Tibial artery (tissue), 4 donors: ENCODE measurements at regions of chr17 and their contacts with region 1.

Region 1: DNA sequence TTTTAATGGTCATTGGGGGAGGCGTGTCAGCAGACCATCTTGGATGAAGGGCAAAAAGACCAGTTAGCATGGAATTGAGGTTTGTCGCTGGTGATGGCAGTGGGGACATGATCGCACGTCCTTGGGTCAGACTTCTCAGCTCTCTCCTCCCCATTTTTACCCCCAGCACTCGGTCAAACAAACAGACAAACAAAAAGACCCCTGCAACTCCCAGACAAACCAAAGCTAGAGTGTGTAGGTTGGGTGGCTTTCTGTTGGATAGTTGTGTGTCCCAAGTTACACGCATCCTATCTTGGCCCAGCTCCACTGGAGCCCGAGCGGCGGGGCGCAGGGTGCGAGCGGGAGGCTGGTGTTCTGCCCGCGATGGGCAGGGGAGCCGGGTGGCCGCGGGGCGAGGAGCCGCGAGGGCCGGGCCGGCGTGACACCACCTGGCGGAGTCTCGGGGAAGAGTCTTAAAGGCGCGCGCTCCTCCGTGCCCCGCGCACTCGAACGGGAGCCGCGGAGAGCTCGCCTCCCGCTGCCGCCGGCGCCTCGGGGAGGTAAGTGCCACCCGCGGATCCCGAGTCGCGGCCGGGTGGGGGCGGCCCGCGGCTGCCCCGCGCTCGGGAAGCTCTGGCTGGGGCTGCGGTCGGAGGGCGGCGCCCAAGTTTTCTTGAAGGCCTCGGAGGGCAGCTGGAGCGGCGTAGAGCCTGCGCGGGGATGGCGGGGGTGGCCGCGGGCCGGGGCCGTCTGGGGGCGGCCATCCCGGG is 18.5 kb upstream of the NTN1 start:
- DNase-seq: peak in 1 of 2 donors; percentile 81
- H3K4me3 ChIP-seq: peak overlapping the region; percentile 57 to 60
- H3K27ac ChIP-seq: peak overlapping the region; percentile 24 to 64
- H3K4me1 ChIP-seq: peaks cover 0 to 19% (median 14%) of the 10 kb centered on the region in 4 donors
- H3K27me3 ChIP-seq: peaks cover 0 to 31% of the 10 kb centered on the region in 2 donors
- CTCF ChIP-seq: peak; percentile 27 to 33

Region 2: DNA sequence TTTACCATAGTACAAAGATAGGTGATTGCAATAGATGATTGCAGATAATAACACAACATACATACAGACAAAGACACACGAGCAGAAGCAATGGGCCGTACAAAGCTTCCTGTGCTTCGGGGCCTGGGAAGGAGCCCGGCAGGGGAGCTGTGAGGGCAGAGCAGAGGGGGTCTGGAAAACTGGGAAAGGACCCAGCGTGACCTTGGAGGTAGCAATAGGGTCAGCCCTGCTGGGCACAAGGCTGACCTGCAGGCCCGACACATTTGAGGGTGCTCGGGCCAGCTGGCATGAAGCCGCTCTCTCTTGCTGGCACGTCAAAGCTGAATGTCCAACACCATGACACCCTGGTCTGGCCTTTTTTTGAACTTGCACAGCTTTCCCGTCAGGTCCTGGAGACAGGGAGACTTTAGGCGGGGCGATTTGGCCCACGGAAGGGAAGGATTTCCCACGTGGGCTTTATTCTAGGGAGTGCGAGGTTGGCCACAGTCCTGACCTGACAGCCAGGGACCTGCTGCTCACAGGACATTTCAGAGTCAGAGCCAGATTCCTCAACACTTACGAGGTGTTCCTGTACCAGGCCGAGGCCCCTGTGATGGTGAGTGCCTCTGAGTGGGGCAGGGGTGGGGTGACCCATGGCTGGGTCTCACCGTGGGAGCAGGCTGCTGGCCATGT is 101.7 kb after region 1 on chr17:
- intact Hi-C with region 1: no loop called
- DNase-seq: peak; percentile 45 to 88
- H3K4me3 ChIP-seq: no peak overlapping the region
- H3K27ac ChIP-seq: peak overlapping the region; percentile 47 to 54
- H3K4me1 ChIP-seq: peaks cover 0 to 44% (median 10%) of the 10 kb centered on the region in 4 donors
- H3K27me3 ChIP-seq: no peaks in the 10 kb centered on the region
- CTCF ChIP-seq: peak in 1 of 2 experiments; percentile 23

Region 3: DNA sequence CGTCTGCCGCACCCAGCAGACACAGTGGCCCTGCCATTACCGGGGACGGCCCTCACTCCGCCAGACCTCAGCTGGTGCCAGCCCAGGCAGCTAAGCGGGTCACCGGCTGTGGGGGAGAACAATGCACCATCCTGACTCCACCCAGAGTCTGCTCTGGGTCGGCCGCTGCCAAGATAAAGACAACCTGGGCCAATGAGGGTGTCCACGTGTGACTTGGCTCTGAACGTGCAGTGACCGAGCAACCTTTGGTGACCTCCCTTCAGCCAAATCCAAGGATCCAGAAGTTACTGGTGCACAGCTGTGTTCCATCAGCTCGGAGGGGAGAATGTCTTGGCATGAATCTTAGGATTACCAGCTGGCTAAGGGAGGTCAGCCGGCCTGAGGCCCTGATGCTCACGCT is 174.4 kb after region 1 on chr17:
- intact Hi-C with region 1: loop called (anchors 10 kb)
- DNase-seq: no peak
- H3K4me3 ChIP-seq: no peak overlapping the region
- H3K27ac ChIP-seq: peak overlapping the region in 1 of 2 donors; percentile 67
- H3K4me1 ChIP-seq: peaks cover 0 to 51% (median 15%) of the 10 kb centered on the region in 4 donors
- H3K27me3 ChIP-seq: no peaks in the 10 kb centered on the region
- CTCF ChIP-seq: no peak

Region 4: GRCh38 chr17:9313346-9313745 is 310.6 kb after region 1 on chr17:
- intact Hi-C with region 1: no loop called
- DNase-seq: no peak
- H3K4me3 ChIP-seq: no peak overlapping the region
- H3K27ac ChIP-seq: no peak overlapping the region
- H3K4me1 ChIP-seq: no peaks in the 10 kb centered on the region
- H3K27me3 ChIP-seq: no peaks in the 10 kb centered on the region
- CTCF ChIP-seq: no peak